Aorta (tissue), 5 donors: ENCODE measurements at regions of chrX and their contacts with region 1.

Region 1: GRCh38 chrX:13747836-13748235 is 13.3 kb downstream of the OFD1 start:
- DNase-seq: no peak
- ATAC-seq: no peak
- H3K4me3 ChIP-seq: no peak overlapping the region
- H3K27ac ChIP-seq: no peak overlapping the region
- H3K4me1 ChIP-seq: no peaks in the 10 kb centered on the region
- H3K27me3 ChIP-seq: no peaks in the 10 kb centered on the region

Region 2: DNA sequence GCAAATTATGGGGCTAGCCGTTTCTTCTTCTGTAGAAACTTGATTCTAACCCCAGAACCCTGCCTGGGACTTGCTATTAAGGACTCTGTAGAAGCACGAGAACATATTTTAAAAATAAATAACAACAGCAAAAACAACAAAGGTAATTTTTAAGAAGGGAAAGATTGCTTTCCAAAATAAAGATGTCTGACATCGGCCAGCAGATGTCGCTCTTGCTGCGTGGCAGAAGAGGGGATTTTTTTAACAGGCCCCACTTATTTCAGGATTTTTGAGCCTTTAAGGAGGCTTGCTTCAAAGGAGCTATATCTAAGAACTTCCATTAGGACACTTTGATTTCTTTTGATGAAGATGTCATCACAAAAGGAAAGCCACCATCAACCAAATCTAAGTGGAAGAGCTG is 241.3 kb before region 1 on chrX:
- intact Hi-C with region 1: loop called (anchors 10 kb)
- DNase-seq: peak in 1 of 2 donors; percentile 80
- ATAC-seq: no peak
- H3K4me3 ChIP-seq: no peak overlapping the region
- H3K27ac ChIP-seq: no peak overlapping the region
- H3K4me1 ChIP-seq: no peaks in the 10 kb centered on the region
- H3K27me3 ChIP-seq: no peaks in the 10 kb centered on the region